Heart left ventricle (tissue), 16 donors: ENCODE measurements at regions of chr20 and their contacts with region 1.

Region 1: DNA sequence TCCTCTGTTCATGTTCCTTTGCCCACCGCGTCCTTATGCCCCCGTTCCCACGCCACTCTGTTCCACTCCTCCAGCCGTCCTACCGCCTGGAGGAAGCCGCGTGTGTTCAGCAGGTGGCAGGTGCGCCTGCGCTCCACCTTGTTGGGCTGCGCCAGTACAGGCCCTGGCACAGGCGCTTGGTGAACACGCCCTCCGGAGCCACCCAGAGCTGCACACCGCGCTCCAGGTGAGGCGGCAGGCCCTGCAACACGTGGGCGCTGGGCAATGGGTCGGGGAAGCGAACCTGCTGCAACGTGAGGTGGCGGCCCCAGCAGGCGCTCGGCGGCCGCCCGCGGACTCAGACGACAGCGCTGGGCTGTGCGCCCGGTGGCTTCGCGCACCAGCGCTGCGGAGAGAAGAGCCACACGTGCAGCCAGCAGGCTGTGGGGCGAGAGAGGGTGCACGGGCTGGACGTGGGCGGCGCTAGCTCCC is 4.1 kb upstream of the FOXS1 start:
- DNase-seq: no peak
- ATAC-seq: peak in 1 of 4 donors; percentile 19
- H3K4me3 ChIP-seq: no peak overlapping the region
- H3K27ac ChIP-seq: no peak overlapping the region
- H3K4me1 ChIP-seq: peaks cover 0 to 19% (median 2%) of the 10 kb centered on the region in 12 donors
- H3K27me3 ChIP-seq: peaks cover 0 to 54% (median 19%) of the 10 kb centered on the region in 9 donors
- CTCF ChIP-seq: no peak
- POLR2A ChIP-seq: no peak

Region 2: GRCh38 chr20:31861346-31862156 is 12.1 kb after region 1 on chr20:
- intact Hi-C with region 1: no loop called
- DNase-seq: peak; percentile 67 to 85 (median 73)
- ATAC-seq: peak in 3 of 4 donors; percentile 47 to 86 (median 74)
- H3K4me3 ChIP-seq: peak overlapping the region; percentile 34 to 80 (median 56)
- H3K27ac ChIP-seq: peak overlapping the region in 1 of 12 donors; percentile 26
- H3K4me1 ChIP-seq: peaks cover 4 to 22% (median 13%) of the 10 kb centered on the region in 12 donors
- H3K27me3 ChIP-seq: peaks cover 0 to 34% (median 2%) of the 10 kb centered on the region in 9 donors
- CTCF ChIP-seq: no peak
- POLR2A ChIP-seq: no peak

Region 3: DNA sequence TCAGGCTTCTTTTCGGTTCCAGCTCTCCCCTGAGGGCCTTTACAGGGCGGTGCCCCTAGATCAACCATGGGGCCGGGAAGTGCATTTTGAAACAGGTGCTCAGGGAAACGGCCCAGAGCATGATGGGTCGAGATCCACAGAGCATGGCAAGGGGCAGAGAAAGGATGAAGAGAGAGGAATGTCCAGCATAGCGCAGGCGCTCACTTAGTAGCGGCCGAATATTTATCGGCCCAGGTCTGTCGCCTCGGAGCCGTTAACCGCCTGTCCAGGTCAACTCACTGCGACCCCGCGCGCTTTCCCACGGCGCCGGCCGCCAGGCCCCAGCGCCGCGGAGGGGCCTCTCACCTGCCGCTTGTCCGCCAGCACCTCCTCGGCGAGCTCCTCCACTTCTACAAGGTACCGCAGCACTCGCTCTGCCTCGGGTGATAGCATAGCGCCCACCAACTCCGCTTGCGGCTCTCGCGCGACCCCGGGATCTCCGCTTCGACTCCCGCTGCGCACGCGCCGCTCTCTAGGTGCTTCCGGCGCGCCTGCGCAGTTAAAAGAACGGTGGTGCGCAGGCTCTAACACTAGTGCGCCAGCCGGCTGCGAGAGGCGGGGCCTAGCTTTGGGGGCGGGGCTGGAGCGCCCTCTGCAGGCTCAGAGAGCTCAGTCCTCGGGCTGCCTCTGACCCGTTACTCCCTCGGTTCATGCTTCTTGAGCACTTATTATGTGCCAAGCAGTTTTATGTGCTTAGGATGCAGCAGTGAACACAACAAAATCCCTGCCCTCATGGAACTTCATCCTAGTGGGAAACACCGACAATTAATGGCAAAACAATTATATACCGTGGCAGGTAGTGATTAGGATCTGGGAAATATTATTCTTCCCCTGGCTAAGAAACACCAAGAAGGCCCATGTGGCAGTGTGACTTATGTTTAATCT is 102.3 kb after region 1 on chr20 and contains the start of gene PDRG1:
- intact Hi-C with region 1: loop called in 9 of 10 experiments (anchors 1 to 5 kb)
- DNase-seq: peak; percentile 94 to 98 (median 96)
- ATAC-seq: peak; percentile 96 to 99 (median 98)
- H3K4me3 ChIP-seq: peak within 1 kb of the TSS; percentile 65 to 100 (median 94)
- H3K27ac ChIP-seq: peak within 1 kb of the TSS in 11 of 12 donors; percentile 69 to 95 (median 85)
- H3K4me1 ChIP-seq: peaks cover 0 to 20% (median 15%) of the 10 kb centered on the region in 12 donors
- H3K27me3 ChIP-seq: peaks cover 0 to 8% (median 0%) of the 10 kb centered on the region in 9 donors
- CTCF ChIP-seq: peak; percentile 93 to 99 (median 97)
- POLR2A ChIP-seq: peak in 1 of 2 donors; percentile 89
- total RNA-seq, gene PDRG1: 5.2 to 10.7 (median 7.3) TPM

Region 4: GRCh38 chr20:32091888-32092346 is 242.4 kb after region 1 on chr20:
- intact Hi-C with region 1: loop called in 7 of 10 experiments (anchors 2 to 10 kb)
- DNase-seq: peak; percentile 68 to 83 (median 75)
- ATAC-seq: peak in 3 of 4 donors; percentile 74 to 80 (median 78)
- H3K4me3 ChIP-seq: no peak overlapping the region
- H3K27ac ChIP-seq: no peak overlapping the region
- H3K4me1 ChIP-seq: peaks cover 0 to 5% (median 0%) of the 10 kb centered on the region in 12 donors
- H3K27me3 ChIP-seq: no peaks in the 10 kb centered on the region
- CTCF ChIP-seq: peak; percentile 82 to 96 (median 91)
- POLR2A ChIP-seq: no peak